Calu3 (cell line): ENCODE measurements at regions of chr4 and their contacts with region 1.

Region 1: DNA sequence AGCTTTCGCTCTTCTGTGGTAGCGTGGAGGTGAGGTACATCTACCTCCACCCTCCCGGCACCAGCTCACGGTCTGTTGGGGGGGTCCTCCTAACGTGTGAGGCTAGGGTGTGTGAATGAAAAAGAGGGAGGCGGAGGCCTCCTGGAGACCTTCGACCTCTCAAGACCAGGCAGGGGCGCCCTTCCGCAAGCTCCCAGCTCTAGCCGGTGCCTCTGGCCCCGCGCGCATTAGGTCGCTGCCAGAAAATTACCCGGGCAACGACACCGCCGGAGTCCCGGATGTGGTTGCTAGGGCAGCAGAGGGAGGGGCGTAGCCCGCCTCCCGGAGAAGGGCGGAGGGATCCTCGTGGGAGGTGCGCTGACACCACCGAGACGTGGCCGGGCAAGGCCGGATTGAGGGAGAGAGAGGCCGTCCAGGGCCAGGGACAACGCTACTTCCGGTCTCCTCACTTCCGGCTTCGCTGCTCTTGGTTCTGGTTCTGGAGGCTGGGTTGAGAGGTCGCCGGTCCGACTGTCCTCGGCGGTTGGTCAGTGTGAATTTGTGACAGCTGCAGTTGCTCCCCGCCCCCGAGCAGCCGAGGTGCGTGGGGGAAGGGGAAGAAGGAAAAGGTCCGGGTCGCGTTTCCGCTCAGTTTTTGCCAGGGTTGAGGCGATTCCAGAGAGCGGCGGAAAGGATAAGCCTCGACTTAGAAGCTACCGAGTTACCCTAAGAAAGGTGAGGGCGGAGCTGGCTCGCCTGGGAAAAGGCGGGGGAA is at the starts of genes ARFIP1 and TIGD4:
- DNase-seq: peak; percentile 96
- H3K4me3 Mint-ChIP-seq: peak within 1 kb of the TSS; percentile 97
- H3K27ac Mint-ChIP-seq: peak within 1 kb of the TSS; percentile 83
- H3K4me1 Mint-ChIP-seq: peaks cover 32% of the 10 kb centered on the region
- H3K27me3 Mint-ChIP-seq: no peaks in the 10 kb centered on the region
- CTCF ChIP-seq: peak; percentile 16
- total RNA-seq, gene ARFIP1: 35.5 and 38.1 TPM in 2 replicates
- total RNA-seq, gene TIGD4: 0.78 and 0.92 TPM in 2 replicates

Region 2: DNA sequence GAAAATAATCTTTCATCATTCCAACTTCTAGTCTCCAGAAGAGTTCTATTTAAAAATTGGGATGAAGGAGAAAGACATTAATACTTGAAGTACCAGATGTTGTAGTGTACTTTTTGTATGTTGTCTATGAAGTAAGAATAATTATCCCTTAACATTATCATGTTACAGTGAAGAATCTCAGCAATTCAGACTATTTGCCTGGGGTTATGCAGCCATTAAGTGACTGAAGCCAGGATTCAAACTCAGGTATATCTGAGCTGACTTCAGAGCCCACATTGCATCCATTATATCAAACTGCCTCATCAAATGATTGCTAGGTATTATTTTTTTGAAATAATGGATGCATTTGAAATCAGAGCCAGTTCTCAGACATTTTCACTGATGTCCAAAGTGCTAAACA is 80.4 kb after region 1 on chr4:
- CTCF ChIA-PET with region 1: no interaction called
- intact Hi-C with region 1: no loop called
- DNase-seq: no peak
- H3K4me3 Mint-ChIP-seq: no peak overlapping the region
- H3K27ac Mint-ChIP-seq: no peak overlapping the region
- H3K4me1 Mint-ChIP-seq: no peaks in the 10 kb centered on the region
- H3K27me3 Mint-ChIP-seq: no peaks in the 10 kb centered on the region
- CTCF ChIP-seq: no peak

Region 3: GRCh38 chr4:152937336-152938236 is 157.9 kb after region 1 on chr4:
- CTCF ChIA-PET with region 1: no interaction called
- intact Hi-C with region 1: loop called (anchors 10 kb)
- DNase-seq: peak; percentile 23
- H3K4me3 Mint-ChIP-seq: peak overlapping the region; percentile 74
- H3K27ac Mint-ChIP-seq: no peak overlapping the region
- H3K4me1 Mint-ChIP-seq: peaks cover 19% of the 10 kb centered on the region
- H3K27me3 Mint-ChIP-seq: no peaks in the 10 kb centered on the region
- CTCF ChIP-seq: no peak